ENCODE measurements at regions of chr12 and their contacts with region 1.

Region 1: DNA sequence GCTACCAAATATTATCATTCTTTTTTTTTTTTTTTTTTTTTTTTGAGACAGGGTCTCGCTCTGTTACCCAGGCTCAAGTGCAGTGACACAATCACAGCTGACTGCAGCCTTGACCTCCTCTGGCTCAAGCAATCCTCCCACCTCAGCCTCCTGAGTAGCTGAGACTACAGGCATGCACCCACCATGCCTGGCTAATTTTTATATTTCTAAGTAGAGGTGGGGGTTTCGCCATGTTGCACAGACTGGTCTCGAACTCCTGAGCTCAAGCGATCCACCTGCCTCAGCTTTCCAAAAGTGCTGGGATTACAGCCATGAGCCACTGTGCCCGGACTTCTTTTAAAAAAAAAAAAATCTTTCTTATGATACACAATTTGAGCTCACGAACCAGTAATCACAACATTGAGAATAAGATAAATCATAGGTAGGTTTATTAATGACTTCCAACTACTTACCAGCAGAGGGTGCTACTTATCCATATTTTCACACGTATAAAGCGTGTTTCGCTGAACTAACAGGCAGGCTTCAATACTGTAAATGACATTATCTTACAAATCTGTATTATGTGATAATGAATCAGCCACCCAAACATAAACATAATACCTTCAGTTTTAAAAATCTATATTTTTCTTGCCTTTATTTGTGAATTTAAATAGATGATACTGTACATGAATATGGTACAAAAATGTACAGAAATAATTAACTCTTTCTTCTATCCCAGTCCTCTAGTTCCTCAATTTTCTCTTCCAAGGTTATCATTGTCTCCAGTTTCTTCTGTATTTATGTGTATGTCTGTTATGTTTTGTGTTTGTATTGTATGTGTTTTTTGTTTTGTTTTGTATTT is 42.5 kb upstream of the BCAT1 start:
- DNase-seq: peak; percentile 50
- H3K4me3 ChIP-seq: no peak overlapping the region
- H3K27ac ChIP-seq: no peak overlapping the region
- H3K4me1 ChIP-seq: no peaks in the 10 kb centered on the region
- H3K27me3 ChIP-seq: no peaks in the 10 kb centered on the region
- CTCF ChIP-seq: peak; percentile 34 to 57

Region 2: GRCh38 chr12:24852420-24852819 is 139.0 kb before region 1 on chr12:
- CTCF ChIA-PET with region 1: no interaction called
- dilution Hi-C with region 1: no loop called
- in situ Hi-C with region 1: no loop called
- intact Hi-C with region 1: loop called (anchors 5 kb)
- DNase-seq: no peak
- H3K4me3 ChIP-seq: no peak overlapping the region
- H3K27ac ChIP-seq: no peak overlapping the region
- H3K4me1 ChIP-seq: peaks cover 5% of the 10 kb centered on the region
- H3K27me3 ChIP-seq: no peaks in the 10 kb centered on the region
- CTCF ChIP-seq: peak; percentile 34 to 56

Region 3: GRCh38 chr12:25089738-25090137 is 98.3 kb after region 1 on chr12:
- CTCF ChIA-PET with region 1: no interaction called
- dilution Hi-C with region 1: loop called (anchors 10 kb)
- in situ Hi-C with region 1: no loop called
- intact Hi-C with region 1: no loop called
- DNase-seq: peak; percentile 73
- H3K4me3 ChIP-seq: no peak overlapping the region
- H3K27ac ChIP-seq: no peak overlapping the region
- H3K4me1 ChIP-seq: peaks cover 9% of the 10 kb centered on the region
- H3K27me3 ChIP-seq: no peaks in the 10 kb centered on the region
- CTCF ChIP-seq: no peak

Region 4: DNA sequence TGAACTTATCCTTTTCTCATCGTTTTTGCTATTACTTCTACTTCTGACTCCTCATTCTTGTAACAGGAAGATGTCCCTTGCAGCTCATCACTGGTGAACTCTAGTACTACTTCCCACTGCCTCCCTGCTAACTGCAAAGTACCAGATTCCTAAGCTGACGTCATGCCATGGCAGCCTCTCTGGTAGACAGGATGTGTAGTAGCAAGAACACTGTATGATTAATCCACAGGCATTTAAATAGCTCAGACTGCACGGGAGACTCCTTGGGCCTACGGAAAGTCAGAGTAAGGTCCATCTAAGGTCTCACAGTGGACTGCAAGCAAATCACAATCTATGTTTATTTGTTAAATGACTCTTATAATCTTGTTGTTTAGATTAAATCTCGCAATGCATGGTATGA is 160.0 kb after region 1 on chr12:
- CTCF ChIA-PET with region 1: no interaction called
- dilution Hi-C with region 1: no loop called
- in situ Hi-C with region 1: no loop called
- intact Hi-C with region 1: loop called (anchors 1 kb)
- DNase-seq: peak; percentile 86
- H3K4me3 ChIP-seq: no peak overlapping the region
- H3K27ac ChIP-seq: no peak overlapping the region
- H3K4me1 ChIP-seq: peaks cover 6% of the 10 kb centered on the region
- H3K27me3 ChIP-seq: no peaks in the 10 kb centered on the region
- CTCF ChIP-seq: no peak

Region 5: GRCh38 chr12:25337916-25338315 is 346.5 kb after region 1 on chr12:
- CTCF ChIA-PET with region 1: no interaction called
- dilution Hi-C with region 1: no loop called
- in situ Hi-C with region 1: no loop called
- intact Hi-C with region 1: no loop called
- DNase-seq: no peak
- H3K4me3 ChIP-seq: no peak overlapping the region
- H3K27ac ChIP-seq: no peak overlapping the region
- H3K4me1 ChIP-seq: peaks cover 7% of the 10 kb centered on the region
- H3K27me3 ChIP-seq: no peaks in the 10 kb centered on the region
- CTCF ChIP-seq: no peak